PC-9 (cell line): ENCODE measurements at regions of chr21 and their contacts with region 1.

Region 1: DNA sequence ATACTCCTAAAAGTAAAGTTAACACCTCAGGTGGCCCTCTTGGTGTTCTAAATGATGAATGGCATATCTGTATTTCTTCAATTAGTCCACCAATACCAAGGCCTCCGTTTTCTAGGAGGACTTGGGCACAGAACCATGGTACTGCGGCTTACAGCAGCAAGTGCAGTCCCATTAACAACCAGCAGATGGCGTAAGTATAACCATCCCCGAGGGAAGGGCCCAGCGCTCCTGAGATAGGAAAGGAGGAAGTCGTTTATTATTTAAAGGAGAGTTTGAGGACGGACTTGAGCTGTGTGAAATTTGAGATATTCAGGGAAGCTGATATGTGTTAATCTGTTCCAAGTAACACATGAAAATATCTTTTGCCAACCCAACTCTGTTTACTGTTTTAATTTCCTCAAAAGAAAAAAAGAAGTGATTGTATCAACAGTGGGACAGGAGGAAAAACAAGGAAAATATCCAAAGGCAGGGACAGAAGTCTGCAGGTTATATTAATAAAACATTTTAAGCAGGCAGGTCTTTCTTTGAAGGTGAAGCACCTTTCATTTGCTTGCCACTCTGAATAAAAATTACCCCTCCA is 37.7 kb upstream of the KCNJ15 start:
- DNase-seq: peak in 1 of 2 experiments; percentile 25
- H3K4me3 ChIP-seq: no peak overlapping the region
- H3K27ac ChIP-seq: no peak overlapping the region
- H3K4me1 ChIP-seq: no peaks in the 10 kb centered on the region
- H3K27me3 ChIP-seq: no peaks in the 10 kb centered on the region
- CTCF ChIP-seq: peak; percentile 83

Region 2: GRCh38 chr21:37615962-37616361 is 603.2 kb before region 1 on chr21:
- CTCF ChIA-PET with region 1: no interaction called
- POLR2A ChIA-PET with region 1: interaction called, 13 read pairs
- intact Hi-C with region 1: no loop called
- DNase-seq: no peak
- H3K4me3 ChIP-seq: no peak overlapping the region
- H3K27ac ChIP-seq: no peak overlapping the region
- H3K4me1 ChIP-seq: no peaks in the 10 kb centered on the region
- H3K27me3 ChIP-seq: no peaks in the 10 kb centered on the region
- CTCF ChIP-seq: no peak

Region 3: GRCh38 chr21:37783016-37783415 is 436.1 kb before region 1 on chr21:
- CTCF ChIA-PET with region 1: interaction called, 12 read pairs
- POLR2A ChIA-PET with region 1: no interaction called
- intact Hi-C with region 1: no loop called
- DNase-seq: no peak
- H3K4me3 ChIP-seq: no peak overlapping the region
- H3K27ac ChIP-seq: no peak overlapping the region
- H3K4me1 ChIP-seq: no peaks in the 10 kb centered on the region
- H3K27me3 ChIP-seq: no peaks in the 10 kb centered on the region; the same call in 1 of the 2 replicates
- CTCF ChIP-seq: no peak

Region 4: DNA sequence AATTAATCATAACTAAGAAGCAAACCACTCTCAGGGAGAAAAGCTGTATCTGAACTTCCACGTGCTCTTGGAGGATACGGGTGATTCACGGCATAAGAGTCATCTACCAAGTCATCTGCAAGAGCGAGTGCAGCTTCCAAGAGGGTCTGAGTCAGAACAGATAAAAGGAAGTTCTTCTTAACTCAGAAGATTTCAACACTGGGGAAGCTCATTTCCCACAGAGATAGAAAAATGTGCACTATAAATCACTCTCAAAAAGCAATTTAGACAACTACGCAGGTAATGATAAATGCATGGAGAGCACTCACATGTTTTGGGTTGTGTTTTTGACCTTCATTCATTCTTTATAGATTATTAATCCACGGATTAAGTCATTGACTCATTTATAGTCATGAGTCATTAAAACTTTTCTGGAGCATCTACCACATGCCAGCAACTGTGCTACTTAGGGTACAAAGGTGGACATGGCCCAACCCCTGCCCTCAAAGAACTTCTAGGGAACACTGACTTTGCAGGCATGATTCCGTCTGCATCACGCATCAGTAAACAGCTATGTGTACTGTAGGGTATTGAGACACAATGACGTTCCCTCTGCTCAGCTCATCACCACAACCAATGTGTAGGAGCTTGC is 58.5 kb after region 1 on chr21:
- CTCF ChIA-PET with region 1: no interaction called
- POLR2A ChIA-PET with region 1: no interaction called
- intact Hi-C with region 1: no loop called
- DNase-seq: no peak
- H3K4me3 ChIP-seq: no peak overlapping the region
- H3K27ac ChIP-seq: no peak overlapping the region
- H3K4me1 ChIP-seq: no peaks in the 10 kb centered on the region
- H3K27me3 ChIP-seq: no peaks in the 10 kb centered on the region
- CTCF ChIP-seq: no peak